Dorsolateral prefrontal cortex (tissue), 120 donors: ENCODE measurements at regions of chr1 and their contacts with region 1.

Region 1: DNA sequence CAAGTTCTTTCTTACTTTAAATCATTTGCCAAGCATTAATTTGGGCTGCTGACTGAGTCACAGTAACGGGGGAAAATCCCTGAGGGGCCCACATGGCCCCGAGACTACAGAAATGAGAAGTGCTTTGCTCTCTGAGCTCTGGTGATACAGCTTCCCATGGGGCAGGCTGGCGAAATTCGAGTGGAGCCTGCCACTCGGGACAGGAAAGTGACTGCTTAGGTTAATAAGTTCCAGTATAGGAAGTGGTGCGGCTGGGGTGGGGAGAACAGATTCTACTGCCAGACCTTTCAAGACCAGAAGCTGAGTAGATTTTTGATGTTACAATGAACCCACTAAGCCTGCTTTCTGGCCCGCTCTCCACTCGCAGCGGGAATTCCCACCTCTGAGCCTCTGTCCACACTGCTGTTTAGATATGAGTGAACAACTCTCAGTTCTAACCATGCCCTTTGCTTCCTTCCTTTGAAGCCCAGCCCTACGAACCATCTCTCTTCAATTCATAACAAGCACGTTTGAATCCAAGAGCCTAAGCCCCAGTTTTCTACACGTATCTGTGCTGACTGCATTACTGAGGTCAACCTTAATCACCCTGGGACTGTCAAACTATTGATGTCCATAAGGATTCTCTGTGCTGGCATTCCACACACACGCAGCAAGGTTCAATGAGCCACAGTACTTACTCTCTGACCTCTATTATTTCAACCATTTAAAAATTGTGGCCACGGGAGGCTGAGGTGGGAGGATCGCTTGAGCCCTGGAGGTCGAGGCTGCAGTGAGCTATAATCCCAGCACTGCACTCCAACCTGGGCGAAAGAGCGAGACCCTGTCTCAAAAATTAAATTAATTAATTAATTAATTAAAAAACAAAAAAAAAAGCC is 9.6 kb downstream of the ZBTB17 start:
- DNase-seq: no peak
- H3K4me3 ChIP-seq: peak overlapping the region in 34 of 59 donors; percentile 1 to 48 (median 16)
- H3K27ac ChIP-seq: peak overlapping the region; percentile 0 to 98 (median 93)
- H3K27me3 ChIP-seq: no peaks in the 10 kb centered on the region
- CTCF ChIP-seq: peak in 1 of 56 donors; percentile 6

Region 2: DNA sequence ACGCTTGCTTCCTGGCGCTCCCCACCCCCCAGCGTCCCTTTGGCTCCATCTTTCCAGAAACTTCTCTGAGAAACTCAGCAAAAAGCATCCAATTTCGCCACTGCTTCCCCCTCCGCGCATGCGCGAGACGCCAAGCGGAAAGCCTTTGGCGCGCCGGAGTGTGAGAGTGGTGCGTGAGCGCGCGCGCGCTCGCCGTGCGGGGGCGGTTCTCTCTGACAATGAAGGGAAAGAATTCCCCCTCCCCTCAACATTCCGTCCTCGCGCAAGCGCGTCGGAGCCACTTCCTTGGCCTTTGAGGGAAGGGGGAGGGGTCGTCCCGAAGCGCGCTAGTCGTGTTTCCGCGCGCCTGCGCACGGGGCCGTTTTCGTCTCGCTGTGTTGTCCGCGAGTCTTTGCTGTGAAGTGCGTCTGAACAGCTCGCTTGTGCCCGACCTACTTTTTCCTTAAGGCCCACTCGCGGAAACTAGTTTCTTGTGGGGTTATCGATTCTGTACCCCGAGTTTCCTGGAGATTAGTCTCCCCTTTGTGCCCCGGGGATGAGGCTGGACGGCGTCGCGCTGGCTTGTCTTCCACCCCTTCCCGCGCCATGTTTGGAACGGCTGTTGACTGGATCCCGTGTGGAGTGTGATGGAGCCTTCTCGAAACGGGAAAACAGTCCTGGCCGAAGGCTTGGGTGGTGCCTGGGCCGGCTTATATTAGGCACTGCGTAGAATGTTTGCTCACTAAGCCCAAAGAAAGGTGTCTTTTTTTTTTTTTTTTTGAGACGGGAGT is 130.4 kb before region 1 on chr1:
- intact Hi-C with region 1: loop called in 1 of 2 experiments (anchors 2 kb)
- DNase-seq: peak; percentile 97 to 99 (median 98)
- H3K4me3 ChIP-seq: peak overlapping the region; percentile 64 to 95 (median 83)
- H3K27ac ChIP-seq: peak overlapping the region; percentile 97 to 100 (median 100)
- H3K27me3 ChIP-seq: no peaks in the 10 kb centered on the region
- CTCF ChIP-seq: peak in 18 of 56 donors; percentile 5 to 46 (median 20)

Region 3: GRCh38 chr1:15847100-15847892 is 119.0 kb before region 1 on chr1 and contains the start of gene SPEN:
- intact Hi-C with region 1: loop called in 1 of 2 experiments (anchors 5 kb)
- DNase-seq: peak; percentile 91 to 98 (median 96)
- H3K4me3 ChIP-seq: peak within 1 kb of the TSS; percentile 63 to 99 (median 91)
- H3K27ac ChIP-seq: peak within 1 kb of the TSS; percentile 88 to 99 (median 98)
- H3K27me3 ChIP-seq: no peaks in the 10 kb centered on the region
- CTCF ChIP-seq: peak in 22 of 56 donors; percentile 6 to 43 (median 22)
- total RNA-seq, gene SPEN: 64.4 to 134 (median 84.8) TPM

Region 4: DNA sequence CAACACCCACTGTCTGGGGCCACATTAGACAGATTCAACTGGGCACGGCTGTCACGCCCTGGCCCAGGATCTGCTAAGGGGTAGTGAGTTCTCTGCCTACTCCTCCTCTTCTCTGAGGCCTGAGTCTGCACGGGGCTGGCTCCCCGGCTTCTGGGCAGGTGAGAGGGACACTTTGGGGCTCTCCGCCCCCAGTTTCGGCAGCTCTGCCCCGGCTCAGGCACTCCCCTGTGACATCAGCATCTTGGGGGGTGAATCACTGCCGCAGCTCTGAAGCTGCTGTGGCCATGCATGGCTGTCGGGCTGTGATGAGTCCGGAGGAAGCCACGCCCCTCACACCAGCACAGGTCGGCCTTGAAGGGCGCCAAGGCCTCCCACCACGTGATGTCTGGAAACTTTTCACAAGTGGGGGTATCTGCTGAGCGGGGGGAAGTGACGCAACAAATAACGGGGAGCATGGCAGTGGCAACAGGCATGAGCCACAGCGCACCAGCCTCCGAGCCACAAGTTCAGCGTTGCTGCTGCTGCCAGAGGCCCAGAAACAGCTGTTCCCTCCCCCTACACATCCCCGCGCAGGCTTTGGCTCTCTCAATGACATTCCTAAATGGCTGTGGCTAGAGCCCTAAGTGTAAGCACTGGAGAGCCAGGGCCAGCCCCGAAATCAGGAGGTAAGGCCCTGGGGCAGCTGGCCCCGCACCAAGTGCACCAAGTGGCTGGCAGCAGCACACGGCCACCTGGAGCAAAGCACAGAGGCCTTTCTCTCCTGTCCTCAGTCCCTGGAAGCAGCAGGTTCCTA is 16.7 kb before region 1 on chr1:
- intact Hi-C with region 1: loop called in 1 of 2 experiments (anchors 1 kb)
- DNase-seq: peak in 9 of 10 donors; percentile 44 to 91 (median 67)
- H3K4me3 ChIP-seq: peak overlapping the region in 33 of 59 donors; percentile 0 to 39 (median 21)
- H3K27ac ChIP-seq: peak overlapping the region; percentile 75 to 96 (median 90)
- H3K27me3 ChIP-seq: no peaks in the 10 kb centered on the region
- CTCF ChIP-seq: peak in 1 of 56 donors; percentile 5